GM12878 (cell line): ENCODE measurements at regions of chr1 and their contacts with region 1.

Region 1: GRCh38 chr1:241611063-241611462 is 29.1 kb downstream of the CHML start:
- DNase-seq: no peak
- ATAC-seq: peak; percentile 96
- H3K4me3 ChIP-seq: no peak overlapping the region
- H3K27ac ChIP-seq: no peak overlapping the region
- H3K4me1 ChIP-seq: peaks cover 5% of the 10 kb centered on the region; the same call in 1 of the 2 replicates
- H3K27me3 ChIP-seq: no peaks in the 10 kb centered on the region
- CTCF ChIP-seq: peak; percentile 59 to 67 (median 62); a peak in 5 of 6 replicates
- EP300 ChIP-seq: no peak
- POLR2A ChIP-seq: no peak
- RAD21 ChIP-seq: peak; percentile 80

Region 2: GRCh38 chr1:241356519-241357365 is 254.3 kb before region 1 on chr1 and contains the start of gene RGS7:
- CTCF ChIA-PET with region 1: no interaction called
- POLR2A ChIA-PET with region 1: no interaction called
- RAD21 ChIA-PET with region 1: no interaction called
- SMC1A ChIA-PET with region 1: no interaction called
- in situ Hi-C with region 1: no loop called
- intact Hi-C with region 1: no loop called
- DNase-seq: no peak
- ATAC-seq: peak; percentile 52
- H3K4me3 ChIP-seq: no peak within 1 kb of the TSS
- H3K27ac ChIP-seq: no peak within 1 kb of the TSS
- H3K4me1 ChIP-seq: no peaks in the 10 kb centered on the region
- H3K27me3 ChIP-seq: peaks cover 4 to 14% of the 10 kb centered on the region in 2 experiments
- CTCF ChIP-seq: no peak
- EP300 ChIP-seq: no peak
- POLR2A ChIP-seq: no peak
- RAD21 ChIP-seq: no peak
- polyA plus RNA-seq, gene RGS7: not detected

Region 3: DNA sequence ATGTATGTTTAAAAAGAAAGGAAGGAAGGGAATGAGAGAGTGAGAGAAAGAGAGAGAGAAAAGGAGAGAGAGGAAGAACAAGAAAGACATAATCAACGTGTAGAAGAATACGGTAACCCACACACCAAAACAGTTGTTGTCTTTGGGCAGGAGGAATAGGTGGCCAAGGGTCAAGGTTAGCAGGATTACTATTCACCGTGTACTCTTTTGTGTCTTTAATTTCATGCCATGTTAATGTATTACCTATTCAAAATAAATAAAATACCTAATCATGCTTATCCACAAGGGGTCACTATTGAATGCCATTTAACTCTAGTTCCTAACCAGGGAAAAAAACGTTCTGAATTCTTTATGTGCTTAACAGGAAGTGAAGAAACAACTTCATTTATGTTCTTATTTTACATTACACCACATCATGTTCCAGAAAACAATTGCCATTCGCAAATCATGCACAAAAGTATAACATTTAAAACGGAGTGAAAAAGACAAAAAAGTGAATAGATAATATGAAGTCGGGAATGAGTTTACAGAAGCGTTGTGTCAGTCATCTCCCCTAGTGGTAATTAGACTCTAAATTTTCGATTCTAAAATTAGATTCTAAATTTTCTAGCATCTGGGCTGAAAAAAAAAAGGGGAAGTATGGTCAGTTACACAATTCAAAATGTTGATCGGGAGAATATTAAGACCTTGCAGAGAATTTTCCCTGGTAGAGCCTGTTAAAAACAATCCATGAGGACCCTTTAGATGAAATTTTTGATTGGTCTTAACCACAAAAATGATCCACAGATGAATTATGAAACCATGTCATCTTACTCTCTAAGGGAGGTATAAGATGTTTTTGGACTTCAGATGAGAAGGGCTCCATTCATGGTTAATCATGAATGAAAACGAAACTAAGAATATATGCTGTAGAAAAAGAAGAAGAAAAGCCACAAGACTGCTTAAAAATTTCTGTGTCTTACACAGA is 79.6 kb before region 1 on chr1:
- CTCF ChIA-PET with region 1: interaction called, 5 read pairs
- POLR2A ChIA-PET with region 1: no interaction called
- RAD21 ChIA-PET with region 1: interaction called, 5 read pairs
- SMC1A ChIA-PET with region 1: interaction called, 7 read pairs
- in situ Hi-C with region 1: no loop called
- intact Hi-C with region 1: loop called (anchors 5 kb)
- DNase-seq: peak; percentile 66
- ATAC-seq: peak; percentile 89
- H3K4me3 ChIP-seq: peak overlapping the region; percentile 67
- H3K27ac ChIP-seq: peak overlapping the region; percentile 89
- H3K4me1 ChIP-seq: peaks cover 8% of the 10 kb centered on the region; the same call in 1 of the 2 replicates
- H3K27me3 ChIP-seq: no peaks in the 10 kb centered on the region
- CTCF ChIP-seq: peak; percentile 16 to 64 (median 53); a peak in 4 of 6 replicates
- EP300 ChIP-seq: peak; percentile 4 to 38; a peak in 2 of 4 replicates
- POLR2A ChIP-seq: no peak
- RAD21 ChIP-seq: peak; percentile 77

Region 4: GRCh38 chr1:241598249-241598648 is 12.8 kb before region 1 on chr1:
- CTCF ChIA-PET with region 1: interaction called, 30 read pairs
- POLR2A ChIA-PET with region 1: no interaction called
- RAD21 ChIA-PET with region 1: interaction called, 4 read pairs
- SMC1A ChIA-PET with region 1: interaction called, 4 read pairs
- in situ Hi-C with region 1: no loop called
- intact Hi-C with region 1: no loop called
- DNase-seq: peak; percentile 16
- ATAC-seq: no peak
- H3K4me3 ChIP-seq: no peak overlapping the region
- H3K27ac ChIP-seq: no peak overlapping the region
- H3K4me1 ChIP-seq: peaks cover 4% of the 10 kb centered on the region; the same call in 1 of the 2 replicates
- H3K27me3 ChIP-seq: no peaks in the 10 kb centered on the region; a peak in 1 of 4 replicates
- CTCF ChIP-seq: no peak
- EP300 ChIP-seq: no peak
- POLR2A ChIP-seq: no peak
- RAD21 ChIP-seq: no peak

Region 5: DNA sequence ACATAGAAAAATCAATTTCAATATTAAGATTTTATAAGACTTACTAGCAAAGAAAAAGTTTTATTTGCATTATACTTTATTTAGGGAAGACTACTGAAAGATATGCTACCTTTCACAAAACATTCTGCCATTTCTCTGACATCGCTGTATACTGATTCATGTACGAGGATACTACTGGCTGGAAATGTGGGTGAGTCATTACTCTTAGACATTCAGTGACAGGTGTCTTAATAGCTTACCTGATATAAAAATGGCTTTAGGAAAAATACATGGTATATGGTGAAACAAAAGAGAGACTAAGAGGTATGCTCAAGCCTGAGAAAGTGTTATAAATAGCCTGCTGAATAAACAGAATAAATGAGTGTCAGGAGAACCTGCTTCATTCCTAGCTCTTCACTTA is 164.0 kb after region 1 on chr1:
- CTCF ChIA-PET with region 1: no interaction called
- POLR2A ChIA-PET with region 1: no interaction called
- RAD21 ChIA-PET with region 1: no interaction called
- SMC1A ChIA-PET with region 1: no interaction called
- in situ Hi-C with region 1: no loop called
- intact Hi-C with region 1: no loop called
- DNase-seq: no peak
- ATAC-seq: no peak
- H3K4me3 ChIP-seq: no peak overlapping the region
- H3K27ac ChIP-seq: no peak overlapping the region
- H3K4me1 ChIP-seq: no peaks in the 10 kb centered on the region
- H3K27me3 ChIP-seq: no peaks in the 10 kb centered on the region
- CTCF ChIP-seq: no peak
- EP300 ChIP-seq: no peak
- POLR2A ChIP-seq: no peak
- RAD21 ChIP-seq: no peak

Region 6: GRCh38 chr1:241834733-241835377 is 223.8 kb after region 1 on chr1:
- CTCF ChIA-PET with region 1: interaction called, 11 read pairs
- POLR2A ChIA-PET with region 1: no interaction called
- RAD21 ChIA-PET with region 1: interaction called, 5 read pairs
- SMC1A ChIA-PET with region 1: interaction called, 3 read pairs
- in situ Hi-C with region 1: loop called (anchors 5 kb)
- intact Hi-C with region 1: loop called (anchors 2 kb)
- DNase-seq: no peak
- ATAC-seq: 0 out of 3 replicates have a peak, but pooled peaks have one; percentile 37
- H3K4me3 ChIP-seq: no peak overlapping the region
- H3K27ac ChIP-seq: no peak overlapping the region
- H3K4me1 ChIP-seq: peaks cover 10% of the 10 kb centered on the region; the same call in 1 of the 2 replicates
- H3K27me3 ChIP-seq: no peaks in the 10 kb centered on the region
- CTCF ChIP-seq: peak; percentile 36 to 53 (median 47)
- EP300 ChIP-seq: no peak
- POLR2A ChIP-seq: no peak
- RAD21 ChIP-seq: peak; percentile 68

Region 7: DNA sequence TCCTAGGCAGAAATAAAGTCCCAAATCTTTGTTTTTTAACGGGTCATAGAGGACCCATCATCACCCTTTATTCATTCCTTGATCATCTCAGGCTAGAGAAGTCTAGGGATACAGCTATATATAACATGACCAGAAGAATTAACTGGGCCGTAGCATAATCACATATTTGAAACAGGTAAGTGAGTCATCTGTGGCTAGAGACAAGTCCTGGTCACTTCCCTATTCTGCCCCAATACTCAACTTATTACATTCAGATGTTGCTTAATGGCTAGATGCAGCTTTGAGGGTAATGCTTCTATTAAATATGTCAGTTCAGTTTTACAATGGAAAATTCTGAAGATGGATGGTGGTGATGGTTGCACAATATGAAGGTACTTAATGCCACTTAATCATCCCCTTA is 283.9 kb after region 1 on chr1:
- CTCF ChIA-PET with region 1: interaction called, 6 read pairs
- POLR2A ChIA-PET with region 1: no interaction called
- RAD21 ChIA-PET with region 1: interaction called, 5 read pairs
- SMC1A ChIA-PET with region 1: interaction called, 3 read pairs
- in situ Hi-C with region 1: no loop called
- intact Hi-C with region 1: loop called (anchors 2 kb)
- DNase-seq: no peak
- ATAC-seq: peak; percentile 84
- H3K4me3 ChIP-seq: no peak overlapping the region
- H3K27ac ChIP-seq: no peak overlapping the region
- H3K4me1 ChIP-seq: peaks cover 3% of the 10 kb centered on the region; the same call in 1 of the 2 replicates
- H3K27me3 ChIP-seq: no peaks in the 10 kb centered on the region
- CTCF ChIP-seq: no peak
- EP300 ChIP-seq: no peak
- POLR2A ChIP-seq: no peak
- RAD21 ChIP-seq: no peak

Region 8: DNA sequence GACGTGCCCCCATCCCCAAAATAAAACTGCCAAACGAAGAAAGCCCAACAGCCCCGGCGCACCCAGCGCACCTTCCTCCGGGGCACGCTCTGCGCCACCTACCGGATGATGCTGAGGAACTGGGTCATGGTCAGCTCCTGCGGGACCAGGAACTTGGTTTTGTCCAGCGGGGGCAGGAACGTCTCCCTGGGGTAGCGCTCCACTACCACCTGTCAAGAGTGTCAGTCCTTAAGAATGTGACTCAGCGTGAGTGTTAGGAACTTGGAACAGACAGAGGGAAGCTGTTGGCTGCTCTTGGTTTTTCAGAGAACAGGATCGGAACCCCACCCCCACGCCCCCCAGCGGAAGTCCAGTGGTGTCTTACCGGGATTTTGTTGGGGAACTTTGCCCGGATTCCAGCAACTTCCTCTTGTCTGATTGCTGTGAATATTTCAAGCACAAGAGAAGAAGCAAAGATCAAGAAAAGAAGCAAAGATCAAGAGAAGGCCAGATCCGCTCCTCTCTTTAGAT is 387.4 kb after region 1 on chr1:
- CTCF ChIA-PET with region 1: interaction called, 14 read pairs
- POLR2A ChIA-PET with region 1: no interaction called
- RAD21 ChIA-PET with region 1: interaction called, 3 read pairs
- SMC1A ChIA-PET with region 1: interaction called, 5 read pairs
- in situ Hi-C with region 1: loop called (anchors 10 kb)
- intact Hi-C with region 1: loop called (anchors 5 kb)
- DNase-seq: no peak
- ATAC-seq: peak; percentile 91
- H3K4me3 ChIP-seq: peak overlapping the region; percentile 47; the same call in 1 of the 2 replicates
- H3K27ac ChIP-seq: no peak overlapping the region
- H3K4me1 ChIP-seq: no peaks in the 10 kb centered on the region; the same call in 1 of the 2 replicates
- H3K27me3 ChIP-seq: no peaks in the 10 kb centered on the region; a peak in 1 of 4 replicates
- CTCF ChIP-seq: peak; percentile 37 to 88 (median 70)
- EP300 ChIP-seq: no peak
- POLR2A ChIP-seq: no peak
- RAD21 ChIP-seq: peak; percentile 38

Region 9: DNA sequence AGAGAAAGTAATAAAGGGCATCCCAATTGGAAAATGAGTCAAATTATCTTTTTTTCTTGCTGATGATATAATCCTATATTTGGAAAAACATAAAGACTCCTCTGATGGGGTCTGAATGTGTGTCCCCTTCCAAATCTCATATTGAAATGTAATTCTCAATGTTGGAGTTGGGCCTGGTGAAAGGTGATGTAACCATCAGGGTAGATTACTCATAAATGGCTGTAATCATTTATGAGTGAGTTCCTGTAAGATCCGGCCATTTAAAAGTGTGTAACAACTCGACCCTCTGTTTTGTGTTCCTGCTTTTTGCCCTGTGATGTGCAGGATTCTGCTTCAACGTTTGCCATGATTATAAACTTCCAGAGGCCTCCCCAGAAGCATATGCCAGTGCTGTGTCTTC is 432.1 kb after region 1 on chr1:
- CTCF ChIA-PET with region 1: no interaction called
- POLR2A ChIA-PET with region 1: no interaction called
- RAD21 ChIA-PET with region 1: no interaction called
- SMC1A ChIA-PET with region 1: no interaction called
- in situ Hi-C with region 1: no loop called
- intact Hi-C with region 1: no loop called
- DNase-seq: no peak
- ATAC-seq: no peak
- H3K4me3 ChIP-seq: no peak overlapping the region
- H3K27ac ChIP-seq: no peak overlapping the region
- H3K4me1 ChIP-seq: no peaks in the 10 kb centered on the region
- H3K27me3 ChIP-seq: no peaks in the 10 kb centered on the region
- CTCF ChIP-seq: no peak
- EP300 ChIP-seq: no peak
- POLR2A ChIP-seq: no peak
- RAD21 ChIP-seq: no peak